ENCODE measurements at regions of chr3 and their contacts with region 1.

Region 1: DNA sequence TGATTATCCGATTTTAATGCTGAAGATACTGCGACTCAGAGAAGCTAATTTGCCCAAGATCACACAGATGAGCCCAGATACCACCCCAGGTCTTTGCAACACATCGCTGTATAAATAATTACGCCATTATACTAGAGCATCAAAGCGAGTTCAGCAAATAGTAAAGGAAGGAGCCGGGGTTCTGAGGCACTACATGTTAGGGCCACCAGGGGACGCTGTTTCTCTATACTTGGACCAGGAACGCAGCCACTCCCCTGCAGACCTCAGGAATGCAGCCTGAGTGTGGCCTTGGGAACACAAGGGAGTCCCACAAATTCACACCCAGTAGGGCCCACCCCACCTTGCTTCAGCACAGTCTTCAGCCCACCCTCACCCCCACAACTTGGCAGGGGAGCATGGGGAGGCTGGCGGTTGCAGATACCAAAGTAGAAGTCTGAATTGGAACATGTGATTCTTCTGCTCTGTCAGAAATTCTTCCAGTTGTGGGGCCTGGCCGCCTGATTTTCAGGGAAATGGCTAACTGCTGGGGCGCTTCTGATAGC is 57.8 kb upstream of the RYK start:
- DNase-seq: peak; percentile 63 to 85
- ATAC-seq: peak; percentile 77 to 87 (median 85)
- H3K4me3 ChIP-seq: no peak overlapping the region
- H3K4me3 Mint-ChIP-seq: peak overlapping the region; percentile 45
- H3K27ac ChIP-seq: no peak overlapping the region
- H3K27ac Mint-ChIP-seq: no peak overlapping the region
- H3K4me1 ChIP-seq: peaks cover 4% of the 10 kb centered on the region
- H3K4me1 Mint-ChIP-seq: peaks cover 8 to 12% of the 10 kb centered on the region in 2 donors
- H3K27me3 ChIP-seq: peaks cover 17% of the 10 kb centered on the region
- H3K27me3 Mint-ChIP-seq: peaks cover 36 to 58% of the 10 kb centered on the region in 2 donors
- CTCF ChIP-seq: peak; percentile 97

Region 2: DNA sequence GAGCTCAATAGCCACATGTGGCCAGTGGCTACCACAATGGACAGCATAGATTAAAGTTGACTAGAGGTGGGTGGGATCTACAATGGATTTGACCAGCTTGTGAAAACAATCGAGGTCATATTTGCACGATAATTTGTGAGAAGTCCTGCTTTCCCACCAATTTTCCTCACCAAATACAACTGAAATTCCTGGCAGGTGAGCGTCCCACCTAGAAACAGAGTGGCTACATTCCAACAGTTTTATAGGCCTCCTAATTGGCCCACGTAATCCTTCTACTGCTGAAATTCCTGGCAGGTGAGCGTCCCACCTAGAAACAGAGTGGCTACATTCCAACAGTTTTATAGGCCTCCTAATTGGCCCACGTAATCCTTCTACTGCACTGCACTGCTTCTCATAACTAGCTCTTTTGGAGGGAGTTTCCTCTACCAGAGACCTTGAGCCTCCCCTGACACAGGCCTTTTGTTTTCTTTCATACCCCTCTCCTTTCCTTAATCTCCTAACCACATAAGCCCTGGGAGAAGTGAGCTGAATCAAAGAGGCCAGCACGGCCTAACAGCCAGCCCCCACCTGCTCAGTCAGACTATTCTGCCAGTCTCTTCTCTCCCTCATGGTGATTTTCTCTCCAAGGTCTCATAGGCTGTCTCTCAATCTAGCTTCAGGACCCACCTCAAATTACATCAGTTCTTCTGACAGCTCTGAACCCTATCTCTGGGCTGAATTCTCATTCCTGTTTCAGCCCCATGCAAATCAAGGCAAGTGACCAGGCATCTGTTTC is 828.3 kb before region 1 on chr3:
- intact Hi-C with region 1: no loop called
- DNase-seq: no peak
- ATAC-seq: no peak
- H3K4me3 ChIP-seq: no peak overlapping the region
- H3K4me3 Mint-ChIP-seq: no peak overlapping the region
- H3K27ac ChIP-seq: no peak overlapping the region
- H3K27ac Mint-ChIP-seq: no peak overlapping the region
- H3K4me1 ChIP-seq: peaks cover 2% of the 10 kb centered on the region
- H3K4me1 Mint-ChIP-seq: no peaks in the 10 kb centered on the region
- H3K27me3 ChIP-seq: no peaks in the 10 kb centered on the region
- H3K27me3 Mint-ChIP-seq: peaks cover 0 to 4% of the 10 kb centered on the region in 2 donors
- CTCF ChIP-seq: no peak

Region 3: DNA sequence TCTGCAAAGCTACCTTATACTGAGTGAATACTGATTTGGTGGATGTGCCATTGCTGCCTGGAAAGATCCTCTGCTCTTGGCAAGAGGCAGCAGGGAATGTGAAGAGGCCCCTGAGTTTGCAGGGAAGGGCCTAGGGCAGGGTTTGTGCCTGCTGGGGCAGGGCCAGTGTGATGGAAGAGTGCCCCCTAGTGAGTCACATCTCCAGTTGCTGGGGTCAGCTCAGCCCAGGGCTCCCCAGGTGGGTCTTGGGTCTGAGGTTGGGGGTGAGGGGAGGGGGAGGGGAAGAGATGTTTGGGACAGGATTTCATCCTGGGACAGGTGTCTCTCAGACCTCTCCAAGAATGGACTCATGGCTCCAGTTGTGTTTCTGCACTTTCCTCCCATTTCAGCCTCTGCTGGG is 70.0 kb after region 1 on chr3:
- intact Hi-C with region 1: loop called (anchors 2 kb)
- DNase-seq: peak in 1 of 2 donors; percentile 65
- ATAC-seq: peak in 1 of 3 donors; percentile 60
- H3K4me3 ChIP-seq: no peak overlapping the region
- H3K4me3 Mint-ChIP-seq: no peak overlapping the region
- H3K27ac ChIP-seq: no peak overlapping the region
- H3K27ac Mint-ChIP-seq: no peak overlapping the region
- H3K4me1 ChIP-seq: peaks cover 16% of the 10 kb centered on the region
- H3K4me1 Mint-ChIP-seq: peaks cover 0 to 12% of the 10 kb centered on the region in 2 donors
- H3K27me3 ChIP-seq: peaks cover 6% of the 10 kb centered on the region
- H3K27me3 Mint-ChIP-seq: peaks cover 44 to 49% of the 10 kb centered on the region in 2 donors
- CTCF ChIP-seq: peak; percentile 16

Region 4: GRCh38 chr3:134737516-134737915 is 429.1 kb after region 1 on chr3:
- intact Hi-C with region 1: no loop called
- DNase-seq: no peak
- ATAC-seq: no peak
- H3K4me3 ChIP-seq: no peak overlapping the region
- H3K4me3 Mint-ChIP-seq: no peak overlapping the region
- H3K27ac ChIP-seq: no peak overlapping the region
- H3K27ac Mint-ChIP-seq: no peak overlapping the region
- H3K4me1 ChIP-seq: no peaks in the 10 kb centered on the region
- H3K4me1 Mint-ChIP-seq: no peaks in the 10 kb centered on the region
- H3K27me3 ChIP-seq: no peaks in the 10 kb centered on the region
- H3K27me3 Mint-ChIP-seq: peaks cover 0 to 23% of the 10 kb centered on the region in 2 donors
- CTCF ChIP-seq: no peak